Thyroid gland (tissue), 4 donors: ENCODE measurements at regions of chr9 and their contacts with region 1.

Region 1: GRCh38 chr9:114738581-114739316 is 56.8 kb upstream of the TEX48 start:
- DNase-seq: peak; percentile 71 to 74
- H3K4me3 ChIP-seq: no peak overlapping the region
- H3K27ac ChIP-seq: no peak overlapping the region
- H3K4me1 ChIP-seq: no peaks in the 10 kb centered on the region
- H3K27me3 ChIP-seq: no peaks in the 10 kb centered on the region
- CTCF ChIP-seq: peak; percentile 68 to 98 (median 86)
- POLR2A ChIP-seq: no peak

Region 2: DNA sequence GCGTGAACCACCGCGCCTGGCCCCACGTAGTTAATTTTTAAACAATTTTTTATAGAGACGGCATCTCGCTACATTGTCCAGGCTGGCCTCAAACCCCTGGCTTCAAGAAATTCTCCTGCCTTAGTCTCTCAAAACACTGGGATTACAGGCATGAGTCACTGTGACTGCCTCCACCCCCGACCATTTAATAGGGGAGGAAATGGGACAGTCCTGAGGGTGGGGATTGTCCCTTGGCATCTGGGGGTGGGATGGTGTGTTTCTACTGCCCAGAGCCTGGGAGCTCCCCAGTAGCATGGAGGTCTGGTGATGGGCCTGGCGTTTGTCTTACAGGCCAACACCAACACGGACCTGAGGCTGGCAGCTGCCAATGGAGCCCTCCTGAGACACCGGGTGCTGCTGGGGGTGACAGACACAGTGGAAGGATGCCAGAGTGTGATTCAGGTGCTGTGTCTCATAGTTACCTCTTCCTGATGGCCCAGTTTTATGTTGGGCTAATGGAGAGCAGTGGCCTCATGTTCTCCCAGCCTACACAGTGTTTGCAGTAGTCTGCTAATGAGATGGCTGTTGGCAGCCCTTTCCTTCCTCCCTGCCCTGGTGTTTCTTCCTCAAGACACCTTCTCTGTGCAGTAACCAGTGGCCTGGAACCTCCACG is 105.2 kb before region 1 on chr9:
- intact Hi-C with region 1: no loop called
- DNase-seq: no peak
- H3K4me3 ChIP-seq: no peak overlapping the region
- H3K27ac ChIP-seq: no peak overlapping the region
- H3K4me1 ChIP-seq: no peaks in the 10 kb centered on the region
- H3K27me3 ChIP-seq: no peaks in the 10 kb centered on the region
- CTCF ChIP-seq: no peak
- POLR2A ChIP-seq: no peak

Region 3: DNA sequence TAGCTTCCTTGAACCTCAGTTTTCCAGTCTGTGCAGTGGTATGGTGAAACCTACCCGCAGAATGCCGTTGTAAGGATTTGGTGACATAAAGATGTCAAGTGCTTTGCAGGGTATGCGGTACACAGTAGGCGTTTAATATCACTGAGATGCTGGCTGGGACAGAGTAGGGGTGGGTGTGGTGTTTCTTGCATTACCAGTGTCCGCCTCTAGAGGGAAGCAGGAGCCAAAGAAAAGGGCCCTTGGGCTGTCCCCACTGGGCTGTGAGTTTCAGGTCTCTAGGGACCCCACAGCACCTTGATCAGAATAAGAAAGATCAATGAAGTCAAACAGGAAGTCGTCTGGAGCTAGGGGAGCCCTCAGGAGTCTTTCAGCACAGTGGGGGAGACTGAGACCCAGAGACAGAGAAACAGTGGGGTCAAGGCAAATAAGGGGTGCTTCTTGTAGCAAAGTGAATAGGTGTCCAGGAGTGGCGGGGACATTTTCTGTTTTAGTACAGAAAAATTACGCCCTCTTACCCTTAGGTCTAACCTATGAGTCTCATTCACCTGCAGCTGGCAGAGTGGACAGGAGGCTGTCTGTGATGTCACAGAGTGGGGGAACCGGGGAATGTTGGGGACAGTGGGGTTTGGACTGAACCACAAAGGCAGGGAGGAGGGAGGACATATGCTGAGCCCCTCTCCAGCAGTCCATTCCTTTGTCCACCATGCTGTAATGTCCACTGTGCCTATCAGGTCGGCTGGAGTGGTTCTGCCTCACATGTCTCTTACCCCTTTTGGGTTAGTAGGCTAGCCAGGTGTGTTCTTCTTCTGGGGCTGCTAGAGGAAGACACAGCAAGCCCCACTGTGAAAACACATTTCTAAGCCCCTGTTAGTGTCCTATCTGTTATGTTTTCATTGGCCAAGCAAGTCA is 76.4 kb before region 1 on chr9:
- intact Hi-C with region 1: loop called (anchors 5 kb)
- DNase-seq: peak; percentile 38 to 50
- H3K4me3 ChIP-seq: no peak overlapping the region
- H3K27ac ChIP-seq: no peak overlapping the region
- H3K4me1 ChIP-seq: no peaks in the 10 kb centered on the region
- H3K27me3 ChIP-seq: no peaks in the 10 kb centered on the region
- CTCF ChIP-seq: peak; percentile 53 to 86 (median 72)
- POLR2A ChIP-seq: no peak

Region 4: DNA sequence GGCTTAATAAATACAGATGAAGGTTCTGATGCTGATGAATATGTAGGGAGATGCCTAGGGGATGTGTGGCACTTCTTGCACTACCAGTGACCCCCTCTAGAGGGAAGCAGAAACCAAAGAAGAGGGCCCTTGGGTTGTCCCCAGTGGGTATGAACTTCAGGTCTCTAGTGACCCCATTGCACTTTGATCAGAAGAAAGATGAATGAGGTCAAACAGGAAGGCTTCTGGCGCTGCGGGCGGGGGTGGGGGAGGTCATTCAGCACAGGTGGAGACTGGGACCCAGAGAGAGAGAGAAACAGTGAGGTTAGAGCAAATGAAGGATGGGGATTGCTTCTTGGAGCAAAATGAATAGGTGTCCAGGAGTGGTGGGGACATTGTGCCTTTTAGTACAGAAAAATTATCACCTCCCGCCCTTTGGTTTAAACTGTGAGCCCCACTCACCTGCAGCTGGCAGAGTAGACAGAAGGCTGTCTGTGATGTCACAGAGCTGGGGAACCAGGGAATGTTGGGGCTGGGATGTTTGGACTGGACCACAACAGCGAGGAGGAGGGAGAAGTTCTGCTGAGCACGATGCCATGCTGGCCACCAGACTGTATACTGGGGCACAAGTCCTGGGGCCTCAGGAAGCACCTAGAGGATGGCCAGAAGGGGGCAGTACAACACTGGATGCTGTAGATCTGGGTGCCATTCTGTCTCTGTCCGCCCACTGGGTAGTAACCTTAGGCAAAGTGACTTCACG is 57.0 kb before region 1 on chr9 and contains the start of gene TEX48:
- intact Hi-C with region 1: loop called (anchors 5 kb)
- DNase-seq: peak; percentile 33 to 35
- H3K4me3 ChIP-seq: no peak within 1 kb of the TSS
- H3K27ac ChIP-seq: no peak within 1 kb of the TSS
- H3K4me1 ChIP-seq: peaks cover 11 to 14% of the 10 kb centered on the region in 2 donors
- H3K27me3 ChIP-seq: no peaks in the 10 kb centered on the region
- CTCF ChIP-seq: peak; percentile 19 to 62 (median 36)
- POLR2A ChIP-seq: no peak
- total RNA-seq, gene TEX48: not detected

Region 5: GRCh38 chr9:114693248-114693855 is 45.4 kb before region 1 on chr9:
- intact Hi-C with region 1: no loop called
- DNase-seq: no peak
- H3K4me3 ChIP-seq: no peak overlapping the region
- H3K27ac ChIP-seq: no peak overlapping the region
- H3K4me1 ChIP-seq: peaks cover 0 to 9% of the 10 kb centered on the region in 2 donors
- H3K27me3 ChIP-seq: no peaks in the 10 kb centered on the region
- CTCF ChIP-seq: no peak
- POLR2A ChIP-seq: no peak

Region 6: DNA sequence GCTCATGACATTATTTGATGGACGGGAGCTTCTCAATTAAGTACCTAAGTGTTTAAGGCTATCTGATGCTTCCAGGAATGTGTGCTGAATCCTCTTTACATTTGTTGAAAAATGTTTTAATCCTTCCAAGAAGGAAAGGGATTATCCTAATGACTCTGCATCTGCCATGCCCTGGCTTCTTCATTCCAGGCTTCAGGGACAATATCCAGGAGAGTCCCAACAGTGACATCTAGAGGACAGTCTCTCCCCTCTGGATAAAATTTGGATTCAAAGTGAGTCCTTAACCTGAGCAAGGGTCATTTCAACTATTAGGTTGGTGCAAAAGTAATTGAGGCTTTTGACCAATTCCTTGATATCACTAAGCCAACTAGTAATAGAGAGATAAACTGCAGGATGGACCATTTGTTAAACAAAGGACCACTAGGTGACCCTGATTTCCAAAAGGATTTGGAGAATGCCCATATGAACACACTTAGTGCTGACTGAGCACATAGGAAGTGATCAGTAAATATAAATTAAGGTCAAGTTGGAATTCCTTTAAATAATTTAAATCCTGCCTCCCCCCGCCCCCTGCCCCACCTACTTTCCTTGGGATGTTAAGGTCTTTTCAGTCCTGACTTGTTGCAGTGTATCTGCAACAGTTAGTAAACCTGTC is 172.5 kb after region 1 on chr9:
- intact Hi-C with region 1: loop called (anchors 5 kb)
- DNase-seq: peak in 1 of 2 donors; percentile 25
- H3K4me3 ChIP-seq: no peak overlapping the region
- H3K27ac ChIP-seq: peak overlapping the region in 1 of 3 donors; percentile 26
- H3K4me1 ChIP-seq: peaks cover 12 to 44% of the 10 kb centered on the region in 2 donors
- H3K27me3 ChIP-seq: no peaks in the 10 kb centered on the region
- CTCF ChIP-seq: peak; percentile 35 to 84 (median 75)
- POLR2A ChIP-seq: no peak

Region 7: GRCh38 chr9:115013998-115014397 is 275.2 kb after region 1 on chr9:
- intact Hi-C with region 1: loop called (anchors 2 kb)
- DNase-seq: peak; percentile 63 to 79
- H3K4me3 ChIP-seq: no peak overlapping the region
- H3K27ac ChIP-seq: no peak overlapping the region
- H3K4me1 ChIP-seq: peaks cover 0 to 15% of the 10 kb centered on the region in 2 donors
- H3K27me3 ChIP-seq: no peaks in the 10 kb centered on the region
- CTCF ChIP-seq: peak; percentile 54 to 93 (median 82)
- POLR2A ChIP-seq: no peak